CD8-positive, alpha-beta T cell (primary cell): ENCODE measurements at regions of chr15 and their contacts with region 1.

Region 1: GRCh38 chr15:40857601-40858341 is 13.9 kb downstream of the SPINT1 start:
- DNase-seq: peak; percentile 70 to 87 (median 79)
- ATAC-seq: peak; percentile 97
- H3K4me3 ChIP-seq: no peak overlapping the region
- H3K4me3 Mint-ChIP-seq: no peak overlapping the region
- H3K27ac ChIP-seq: no peak overlapping the region
- H3K27ac Mint-ChIP-seq: no peak overlapping the region
- H3K4me1 ChIP-seq: peaks cover 5% of the 10 kb centered on the region
- H3K4me1 Mint-ChIP-seq: no peaks in the 10 kb centered on the region
- H3K27me3 ChIP-seq: no peaks in the 10 kb centered on the region
- H3K27me3 Mint-ChIP-seq: no peaks in the 10 kb centered on the region
- CTCF ChIP-seq: peak; percentile 79

Region 2: DNA sequence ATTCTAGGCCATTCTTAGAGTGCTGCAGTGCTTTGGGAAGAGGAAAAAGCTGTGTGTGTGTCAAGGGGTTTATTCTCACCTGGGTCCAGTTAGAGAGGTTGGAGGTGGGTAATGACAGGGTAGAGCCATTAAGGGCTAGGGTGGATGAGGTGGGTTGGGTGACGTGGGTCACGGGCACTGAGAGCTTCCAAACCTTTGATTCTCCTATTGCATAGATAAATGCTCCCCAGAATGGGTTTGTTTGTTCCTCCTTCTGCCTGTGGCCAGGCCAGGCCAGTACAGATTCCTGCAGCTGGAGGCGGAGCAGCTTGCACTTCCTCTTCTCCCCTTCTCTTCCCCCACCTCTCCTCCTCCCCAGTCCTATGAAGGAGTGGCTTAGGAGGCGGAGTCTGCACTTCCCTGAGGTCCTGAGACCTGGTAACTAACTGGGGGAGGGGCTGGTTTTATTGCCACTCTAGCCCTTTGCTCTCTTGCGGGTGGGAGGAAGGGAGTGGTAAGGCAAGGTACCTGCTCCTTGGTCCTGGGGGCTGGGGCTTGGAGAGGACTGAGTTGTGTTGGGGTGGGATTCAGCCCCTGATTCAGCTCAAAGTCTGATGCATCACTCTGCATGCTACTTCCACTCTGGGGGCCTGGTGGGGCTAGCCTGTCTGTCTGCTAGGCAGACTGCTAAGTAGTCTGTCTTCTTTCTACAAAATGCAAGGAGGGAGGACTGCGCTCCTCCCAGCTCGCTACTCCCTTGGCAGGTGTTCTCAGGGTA is 10.4 kb before region 1 on chr15:
- CTCF ChIA-PET with region 1: interaction called, 25 read pairs
- POLR2A ChIA-PET with region 1: no interaction called
- intact Hi-C with region 1: no loop called
- DNase-seq: peak in 1 of 9 experiments; percentile 31
- ATAC-seq: no peak
- H3K4me3 ChIP-seq: no peak overlapping the region
- H3K4me3 Mint-ChIP-seq: no peak overlapping the region
- H3K27ac ChIP-seq: no peak overlapping the region
- H3K27ac Mint-ChIP-seq: peak overlapping the region; percentile 57
- H3K4me1 ChIP-seq: peaks cover 8% of the 10 kb centered on the region
- H3K4me1 Mint-ChIP-seq: peaks cover 11% of the 10 kb centered on the region
- H3K27me3 ChIP-seq: peaks cover 0 to 4% of the 10 kb centered on the region in 2 experiments
- H3K27me3 Mint-ChIP-seq: peaks cover 18% of the 10 kb centered on the region
- CTCF ChIP-seq: no peak

Region 3: DNA sequence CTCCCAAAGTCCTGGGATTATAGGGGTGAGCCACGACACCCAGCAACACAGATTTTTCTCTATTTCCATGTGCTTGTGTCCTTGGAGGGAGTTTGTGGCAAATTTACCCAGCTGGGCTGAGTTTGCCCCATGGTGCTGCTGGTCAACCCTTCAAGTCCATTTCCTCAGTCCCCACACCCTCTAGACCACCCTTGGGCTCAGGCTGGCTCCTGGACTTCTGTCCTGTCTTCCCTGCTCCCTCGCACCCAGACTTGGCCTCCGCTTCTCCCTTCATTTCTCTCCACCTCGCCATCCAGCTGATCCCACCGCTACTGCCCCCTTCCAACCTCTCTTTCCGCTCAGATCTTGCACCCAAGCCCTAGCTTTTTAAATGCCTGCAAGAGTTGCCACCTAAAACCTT is 23.6 kb after region 1 on chr15:
- CTCF ChIA-PET with region 1: interaction called, 136 read pairs
- POLR2A ChIA-PET with region 1: no interaction called
- intact Hi-C with region 1: no loop called
- DNase-seq: no peak
- ATAC-seq: no peak
- H3K4me3 ChIP-seq: no peak overlapping the region
- H3K4me3 Mint-ChIP-seq: no peak overlapping the region
- H3K27ac ChIP-seq: no peak overlapping the region
- H3K27ac Mint-ChIP-seq: no peak overlapping the region
- H3K4me1 ChIP-seq: peaks cover 13% of the 10 kb centered on the region
- H3K4me1 Mint-ChIP-seq: peaks cover 10% of the 10 kb centered on the region
- H3K27me3 ChIP-seq: peaks cover 0 to 9% of the 10 kb centered on the region in 2 experiments
- H3K27me3 Mint-ChIP-seq: peaks cover 6% of the 10 kb centered on the region
- CTCF ChIP-seq: no peak

Region 4: DNA sequence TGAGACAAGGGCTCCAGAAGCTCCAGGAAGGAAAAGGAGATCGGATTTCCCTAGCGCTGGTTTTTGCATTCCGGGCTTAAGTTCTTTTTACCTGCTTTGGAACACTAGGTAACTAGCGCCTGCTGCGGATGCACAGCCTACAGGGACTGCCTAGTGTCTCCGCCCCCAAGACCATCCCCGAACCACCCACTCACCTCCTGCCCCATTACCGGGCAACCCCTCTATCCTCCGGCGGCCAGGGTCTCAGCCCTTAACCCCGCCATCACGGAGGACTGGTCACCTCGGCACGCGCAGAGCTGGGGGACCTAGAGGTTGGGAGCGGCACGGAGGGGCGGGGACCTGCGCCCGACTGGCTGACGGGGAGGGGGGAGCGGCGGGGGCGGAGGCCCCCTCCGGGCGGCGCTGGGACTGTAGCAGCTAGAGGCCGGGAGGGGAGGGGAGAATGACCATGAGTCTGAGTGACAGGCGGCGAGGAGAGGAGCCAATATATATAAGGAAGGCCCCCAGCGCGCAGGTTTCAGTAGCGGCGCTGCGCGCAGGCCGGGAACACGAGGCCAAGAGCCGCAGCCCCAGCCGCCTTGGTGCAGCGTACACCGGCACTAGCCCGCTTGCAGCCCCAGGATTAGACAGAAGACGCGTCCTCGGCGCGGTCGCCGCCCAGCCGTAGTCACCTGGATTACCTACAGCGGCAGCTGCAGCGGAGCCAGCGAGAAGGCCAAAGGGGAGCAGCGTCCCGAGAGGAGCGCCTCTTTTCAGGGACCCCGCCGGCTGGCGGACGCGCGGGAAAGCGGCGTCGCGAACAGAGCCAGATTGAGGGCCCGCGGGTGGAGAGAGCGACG is 71.3 kb after region 1 on chr15 and contains the start of gene DLL4:
- CTCF ChIA-PET with region 1: interaction called, 11 read pairs
- POLR2A ChIA-PET with region 1: no interaction called
- intact Hi-C with region 1: no loop called
- DNase-seq: peak in 4 of 9 experiments; percentile 37 to 59 (median 50)
- ATAC-seq: peak; percentile 50
- H3K4me3 ChIP-seq: peak within 1 kb of the TSS; percentile 38 to 63
- H3K4me3 Mint-ChIP-seq: peak within 1 kb of the TSS; percentile 83
- H3K27ac ChIP-seq: no peak within 1 kb of the TSS
- H3K27ac Mint-ChIP-seq: no peak within 1 kb of the TSS
- H3K4me1 ChIP-seq: peaks cover 60% of the 10 kb centered on the region
- H3K4me1 Mint-ChIP-seq: peaks cover 51% of the 10 kb centered on the region
- H3K27me3 ChIP-seq: peaks cover 44 to 62% of the 10 kb centered on the region in 2 experiments
- H3K27me3 Mint-ChIP-seq: peaks cover 63% of the 10 kb centered on the region
- CTCF ChIP-seq: no peak
- total RNA-seq, gene DLL4: 0.08 TPM

Region 5: DNA sequence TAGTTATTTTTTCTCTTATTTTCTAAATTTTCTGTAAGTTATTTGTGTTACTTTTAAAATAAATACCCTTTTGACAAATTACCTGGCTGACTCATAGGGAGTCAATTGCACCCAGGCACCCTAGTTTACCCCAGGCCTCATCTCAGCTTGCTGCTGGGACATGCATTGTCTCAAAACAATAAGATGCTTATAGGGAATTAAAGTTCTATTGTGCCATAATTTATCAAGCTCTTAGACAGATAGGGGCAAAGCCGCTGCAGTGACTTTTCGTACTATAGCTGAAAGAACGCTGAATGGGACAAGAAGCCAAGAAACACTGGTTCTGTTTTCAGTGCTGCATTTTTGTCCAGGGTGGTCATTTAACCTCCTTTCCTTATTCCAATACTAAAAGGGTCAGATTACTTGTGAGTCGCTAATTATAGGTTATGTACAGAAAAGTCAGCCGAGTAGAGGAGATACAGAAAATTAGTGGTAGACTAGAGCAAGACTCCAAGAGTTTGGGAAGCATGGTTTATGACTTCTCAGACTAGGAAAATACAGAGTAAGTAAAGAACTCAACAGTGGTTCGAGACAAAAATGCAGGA is 322.5 kb after region 1 on chr15:
- CTCF ChIA-PET with region 1: interaction called, 22 read pairs
- POLR2A ChIA-PET with region 1: no interaction called
- intact Hi-C with region 1: loop called in 1 of 2 experiments (anchors 1 kb)
- DNase-seq: no peak
- ATAC-seq: no peak
- H3K4me3 ChIP-seq: no peak overlapping the region
- H3K4me3 Mint-ChIP-seq: no peak overlapping the region
- H3K27ac ChIP-seq: no peak overlapping the region
- H3K27ac Mint-ChIP-seq: no peak overlapping the region
- H3K4me1 ChIP-seq: no peaks in the 10 kb centered on the region
- H3K4me1 Mint-ChIP-seq: no peaks in the 10 kb centered on the region
- H3K27me3 ChIP-seq: no peaks in the 10 kb centered on the region
- H3K27me3 Mint-ChIP-seq: peaks cover 3% of the 10 kb centered on the region
- CTCF ChIP-seq: no peak